ENCODE measurements at regions of chr17 and their contacts with region 1.

Region 1: DNA sequence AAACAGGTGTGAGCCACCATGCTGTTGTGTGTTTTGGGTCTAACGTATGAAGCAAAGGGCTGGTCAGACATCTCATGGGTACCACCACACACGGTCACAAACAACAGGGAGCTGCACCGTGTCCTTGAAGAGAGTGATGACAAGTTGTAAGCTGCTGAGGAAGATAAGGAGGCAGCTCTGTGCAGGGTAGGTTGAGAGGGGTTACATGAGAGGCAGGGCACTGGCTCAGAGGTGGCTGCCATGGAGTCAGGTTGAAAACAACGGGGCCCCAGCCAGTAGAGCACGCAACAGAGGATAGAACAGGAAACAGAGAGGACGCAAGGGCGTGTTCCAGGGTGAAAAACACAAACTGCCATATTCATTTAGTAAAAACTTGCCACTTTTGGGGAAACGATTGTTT is 52.2 kb downstream of the TRARG1 start:
- DNase-seq: peak; percentile 39
- ATAC-seq: peak; percentile 64
- H3K4me3 Mint-ChIP-seq: no peak overlapping the region
- H3K27ac Mint-ChIP-seq: no peak overlapping the region
- H3K4me1 Mint-ChIP-seq: peaks cover 14% of the 10 kb centered on the region
- H3K27me3 Mint-ChIP-seq: no peaks in the 10 kb centered on the region

Region 2: DNA sequence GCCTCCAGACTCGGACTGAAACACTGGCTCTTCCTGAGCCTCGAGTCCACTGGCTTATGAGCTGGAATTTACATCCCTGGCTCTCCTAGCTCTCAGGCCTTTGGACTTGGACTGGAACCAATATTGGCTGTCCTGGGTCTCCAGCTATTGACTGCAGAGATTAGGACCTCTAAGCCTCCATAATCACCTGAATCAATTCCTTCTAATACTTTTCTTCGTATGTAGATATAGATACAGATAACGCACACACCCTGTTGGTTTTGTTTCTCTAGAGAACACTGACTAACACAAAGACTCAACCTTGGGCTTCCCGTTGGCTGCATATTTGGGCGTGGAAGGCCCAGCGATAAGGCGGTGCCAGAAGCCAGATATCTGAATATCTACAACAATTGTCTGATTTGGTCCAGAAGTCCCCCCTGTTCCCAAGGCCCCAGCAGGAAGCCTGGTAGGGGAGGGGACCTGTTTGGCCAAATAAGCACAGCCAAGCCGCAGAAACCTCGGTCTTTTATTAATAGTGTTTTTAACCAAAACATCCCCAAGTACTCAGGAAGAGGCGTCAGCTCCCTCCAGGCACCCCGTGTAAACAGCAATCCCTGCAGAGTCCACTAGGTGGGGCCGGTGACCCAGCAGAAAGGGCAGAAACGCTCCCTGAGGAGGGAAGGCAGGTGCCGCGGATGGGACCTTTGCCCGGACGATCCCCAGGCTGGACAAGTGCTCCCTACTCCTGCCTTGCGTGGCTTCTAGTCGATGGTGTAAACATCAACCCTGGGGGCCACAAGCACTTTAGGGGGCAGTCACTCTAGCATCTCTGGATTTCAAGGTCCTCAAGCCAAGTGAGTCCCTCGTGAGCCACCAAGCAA is 208.9 kb before region 1 on chr17:
- CTCF ChIA-PET with region 1: interaction called, 6 read pairs
- POLR2A ChIA-PET with region 1: no interaction called
- intact Hi-C with region 1: loop called in 1 of 2 experiments (anchors 2 kb)
- DNase-seq: peak; percentile 91
- ATAC-seq: peak; percentile 98
- H3K4me3 Mint-ChIP-seq: no peak overlapping the region
- H3K27ac Mint-ChIP-seq: no peak overlapping the region
- H3K4me1 Mint-ChIP-seq: peaks cover 4% of the 10 kb centered on the region
- H3K27me3 Mint-ChIP-seq: peaks cover 3% of the 10 kb centered on the region

Region 3: DNA sequence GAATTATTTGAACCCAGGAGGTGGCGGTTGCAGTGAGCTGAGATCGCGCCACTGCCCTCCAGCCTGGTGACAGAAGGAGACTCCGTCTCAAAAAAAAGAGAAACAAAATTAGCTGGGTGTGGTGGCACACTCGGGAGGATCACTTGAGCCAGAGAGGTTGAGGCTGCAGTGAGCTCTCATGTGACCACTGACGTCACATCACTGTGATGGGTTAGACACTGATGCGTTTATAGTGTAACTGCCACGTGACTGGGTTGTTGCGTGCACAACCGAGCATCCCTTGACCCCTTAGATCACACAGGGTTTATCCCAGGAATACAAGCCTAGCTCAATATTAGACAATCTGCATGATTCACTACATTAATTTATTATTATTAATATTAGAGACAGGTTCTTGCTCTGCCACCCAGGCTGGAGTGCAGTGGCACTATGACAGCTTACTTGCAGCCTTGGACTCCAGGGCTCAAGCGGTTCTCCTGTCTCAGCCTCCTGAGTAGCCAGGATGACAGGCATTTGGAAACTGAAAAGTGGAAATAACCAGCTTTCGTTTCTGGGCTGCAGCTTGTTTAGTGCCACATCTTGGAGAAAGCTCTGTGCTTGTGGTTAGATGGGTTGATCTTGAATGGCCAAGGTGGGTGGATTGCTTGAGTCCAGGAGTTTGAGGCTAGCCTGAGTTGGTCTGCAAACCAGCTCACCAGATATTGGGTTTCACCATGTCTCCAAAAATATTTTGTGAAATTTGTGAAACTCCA is 125.5 kb before region 1 on chr17:
- CTCF ChIA-PET with region 1: no interaction called
- POLR2A ChIA-PET with region 1: no interaction called
- intact Hi-C with region 1: no loop called
- DNase-seq: no peak
- ATAC-seq: no peak
- H3K4me3 Mint-ChIP-seq: no peak overlapping the region
- H3K27ac Mint-ChIP-seq: no peak overlapping the region
- H3K4me1 Mint-ChIP-seq: peaks cover 9% of the 10 kb centered on the region
- H3K27me3 Mint-ChIP-seq: peaks cover 5% of the 10 kb centered on the region

Region 4: GRCh38 chr17:1260086-1260769 is 71.5 kb before region 1 on chr17:
- CTCF ChIA-PET with region 1: interaction called, 21 read pairs
- POLR2A ChIA-PET with region 1: no interaction called
- intact Hi-C with region 1: loop called (anchors 1 kb)
- DNase-seq: no peak
- ATAC-seq: no peak
- H3K4me3 Mint-ChIP-seq: no peak overlapping the region
- H3K27ac Mint-ChIP-seq: no peak overlapping the region
- H3K4me1 Mint-ChIP-seq: peaks cover 11% of the 10 kb centered on the region
- H3K27me3 Mint-ChIP-seq: peaks cover 24% of the 10 kb centered on the region

Region 5: GRCh38 chr17:1267471-1267947 is 64.2 kb before region 1 on chr17:
- CTCF ChIA-PET with region 1: interaction called, 16 read pairs
- POLR2A ChIA-PET with region 1: no interaction called
- intact Hi-C with region 1: loop called in 1 of 2 experiments (anchors 1 kb)
- DNase-seq: no peak
- ATAC-seq: peak; percentile 9
- H3K4me3 Mint-ChIP-seq: peak overlapping the region; percentile 74
- H3K27ac Mint-ChIP-seq: peak overlapping the region; percentile 47
- H3K4me1 Mint-ChIP-seq: peaks cover 9% of the 10 kb centered on the region
- H3K27me3 Mint-ChIP-seq: peaks cover 14% of the 10 kb centered on the region

Region 6: DNA sequence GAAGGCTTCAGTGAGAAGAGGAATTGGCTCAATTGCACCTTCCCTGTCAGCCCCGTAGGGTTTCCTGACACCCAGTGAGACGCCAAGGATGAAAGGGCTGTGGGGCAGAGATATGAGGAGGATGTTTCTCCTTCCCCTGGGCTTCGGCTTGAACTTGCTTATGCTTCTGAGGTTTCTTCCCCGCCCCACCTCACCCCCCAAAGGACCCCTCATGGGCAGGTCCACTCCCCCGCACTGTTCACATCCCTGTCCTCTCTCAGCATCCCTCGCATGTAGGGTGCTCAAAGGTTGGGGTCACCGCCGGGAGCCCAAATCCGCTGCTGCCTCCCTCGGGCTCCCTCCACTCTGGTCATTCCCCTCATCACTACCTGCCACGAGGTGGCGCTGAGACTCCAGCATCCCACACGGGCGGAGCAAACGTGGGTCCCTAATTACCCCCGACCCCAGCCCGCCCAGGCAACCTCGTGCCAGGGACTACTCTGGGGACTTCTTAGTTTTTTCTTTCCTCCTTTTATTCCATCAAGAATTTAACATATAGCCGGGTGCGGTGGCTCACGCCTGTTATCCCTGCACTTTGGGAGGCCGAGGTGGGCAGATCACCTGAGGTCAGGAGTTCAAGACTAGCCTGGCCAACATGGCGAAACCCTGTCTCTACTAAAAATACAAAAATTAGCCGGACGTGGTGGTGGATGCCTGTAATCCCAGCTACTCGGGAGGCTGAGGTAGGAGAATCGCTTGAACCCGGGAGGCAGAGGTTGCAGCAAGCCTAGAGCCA is 55.6 kb before region 1 on chr17:
- CTCF ChIA-PET with region 1: interaction called, 16 read pairs
- POLR2A ChIA-PET with region 1: no interaction called
- intact Hi-C with region 1: loop called (anchors 1 kb)
- DNase-seq: peak; percentile 84
- ATAC-seq: peak; percentile 91
- H3K4me3 Mint-ChIP-seq: no peak overlapping the region
- H3K27ac Mint-ChIP-seq: no peak overlapping the region
- H3K4me1 Mint-ChIP-seq: peaks cover 4% of the 10 kb centered on the region
- H3K27me3 Mint-ChIP-seq: peaks cover 25% of the 10 kb centered on the region

Measured in activated CD4-positive, alpha-beta T cell treated with anti-CD3 and anti-CD28 coated beads for 36 hours (primary cell).